Breast epithelium (tissue), 4 donors: ENCODE measurements at regions of chr5 and their contacts with region 1.

Region 1: GRCh38 chr5:151684690-151685361 is 1.9 kb downstream of the SPARC start:
- DNase-seq: peak in 1 of 2 donors; percentile 53
- H3K4me3 ChIP-seq: peak overlapping the region; percentile 61 to 76 (median 74)
- H3K27ac ChIP-seq: peak overlapping the region; percentile 87 to 95
- H3K4me1 ChIP-seq: peaks cover 12 to 21% of the 10 kb centered on the region in 2 donors
- H3K27me3 ChIP-seq: no peaks in the 10 kb centered on the region
- CTCF ChIP-seq: peak in 1 of 3 donors; percentile 10
- POLR2A ChIP-seq: no peak

Region 2: GRCh38 chr5:151703227-151703626 is 18.4 kb after region 1 on chr5:
- intact Hi-C with region 1: loop called (anchors 1 kb)
- DNase-seq: no peak
- H3K4me3 ChIP-seq: no peak overlapping the region
- H3K27ac ChIP-seq: no peak overlapping the region
- H3K4me1 ChIP-seq: peaks cover 0 to 7% of the 10 kb centered on the region in 2 donors
- H3K27me3 ChIP-seq: no peaks in the 10 kb centered on the region
- CTCF ChIP-seq: no peak
- POLR2A ChIP-seq: no peak

Region 3: GRCh38 chr5:152092580-152092979 is 407.8 kb after region 1 on chr5:
- intact Hi-C with region 1: no loop called
- DNase-seq: no peak
- H3K4me3 ChIP-seq: no peak overlapping the region
- H3K27ac ChIP-seq: no peak overlapping the region
- H3K4me1 ChIP-seq: no peaks in the 10 kb centered on the region
- H3K27me3 ChIP-seq: no peaks in the 10 kb centered on the region
- CTCF ChIP-seq: no peak
- POLR2A ChIP-seq: no peak

Region 4: DNA sequence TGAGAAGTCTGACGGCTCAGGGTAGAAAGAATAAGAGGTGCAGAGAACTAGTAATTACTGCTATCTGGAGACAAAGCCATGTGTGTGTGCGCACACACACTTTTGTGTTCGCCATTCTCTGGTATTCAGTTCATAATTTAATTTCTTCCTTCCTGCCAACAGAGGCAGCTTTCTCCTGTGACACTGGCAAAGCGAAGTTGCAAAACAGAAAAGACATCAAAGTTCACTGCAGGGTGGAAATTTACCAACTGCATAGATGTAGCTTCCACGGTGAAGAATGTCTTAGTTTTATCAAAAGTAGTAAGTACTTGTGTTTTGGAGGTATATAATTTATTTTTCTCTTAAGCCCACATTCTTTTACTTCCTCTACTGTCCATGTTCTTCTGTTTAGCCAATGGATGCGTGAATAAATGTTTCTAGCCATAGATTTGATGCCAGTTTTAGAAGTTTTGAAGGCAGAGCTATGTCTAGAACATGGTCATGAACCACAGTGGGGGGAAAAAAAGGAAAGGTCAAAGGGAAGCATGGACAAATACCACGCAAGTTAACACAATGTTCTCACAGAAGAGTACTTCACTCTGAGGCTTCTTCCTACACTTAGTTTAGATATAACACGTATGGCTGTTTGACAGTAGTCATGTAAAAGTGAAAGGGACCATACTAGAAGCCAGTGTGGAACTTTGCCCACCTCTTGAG is 1269.1 kb after region 1 on chr5:
- intact Hi-C with region 1: no loop called
- DNase-seq: no peak
- H3K4me3 ChIP-seq: no peak overlapping the region
- H3K27ac ChIP-seq: no peak overlapping the region
- H3K4me1 ChIP-seq: no peaks in the 10 kb centered on the region
- H3K27me3 ChIP-seq: no peaks in the 10 kb centered on the region
- CTCF ChIP-seq: no peak
- POLR2A ChIP-seq: no peak